GM12878 (cell line): ENCODE measurements at regions of chr12 and their contacts with region 1.

Region 1: GRCh38 chr12:91326058-91327027 is 143.7 kb upstream of the DCN start:
- DNase-seq: no peak
- ATAC-seq: peak; percentile 80
- H3K4me3 ChIP-seq: no peak overlapping the region
- H3K27ac ChIP-seq: no peak overlapping the region
- H3K4me1 ChIP-seq: no peaks in the 10 kb centered on the region
- H3K27me3 ChIP-seq: no peaks in the 10 kb centered on the region
- CTCF ChIP-seq: peak; percentile 61 to 76 (median 65)
- EP300 ChIP-seq: no peak
- POLR2A ChIP-seq: no peak
- RAD21 ChIP-seq: peak; percentile 69

Region 2: GRCh38 chr12:90940872-90941499 is 385.4 kb before region 1 on chr12:
- CTCF ChIA-PET with region 1: interaction called, 17 read pairs
- POLR2A ChIA-PET with region 1: no interaction called
- RAD21 ChIA-PET with region 1: interaction called, 15 read pairs
- SMC1A ChIA-PET with region 1: interaction called, 6 read pairs
- in situ Hi-C with region 1: no loop called
- intact Hi-C with region 1: loop called (anchors 10 kb)
- DNase-seq: no peak
- ATAC-seq: peak; percentile 88
- H3K4me3 ChIP-seq: no peak overlapping the region
- H3K27ac ChIP-seq: no peak overlapping the region
- H3K4me1 ChIP-seq: no peaks in the 10 kb centered on the region
- H3K27me3 ChIP-seq: no peaks in the 10 kb centered on the region
- CTCF ChIP-seq: peak; percentile 41 to 56 (median 55); a peak in 5 of 6 replicates
- EP300 ChIP-seq: no peak
- POLR2A ChIP-seq: no peak
- RAD21 ChIP-seq: peak; percentile 72

Region 3: GRCh38 chr12:90978117-90978770 is 348.1 kb before region 1 on chr12:
- CTCF ChIA-PET with region 1: interaction called, 27 read pairs
- POLR2A ChIA-PET with region 1: no interaction called
- RAD21 ChIA-PET with region 1: no interaction called
- SMC1A ChIA-PET with region 1: interaction called, 4 read pairs
- in situ Hi-C with region 1: loop called (anchors 10 kb)
- intact Hi-C with region 1: loop called (anchors 1 kb)
- DNase-seq: peak; percentile 11
- ATAC-seq: peak; percentile 87
- H3K4me3 ChIP-seq: no peak overlapping the region
- H3K27ac ChIP-seq: no peak overlapping the region
- H3K4me1 ChIP-seq: no peaks in the 10 kb centered on the region
- H3K27me3 ChIP-seq: no peaks in the 10 kb centered on the region; a peak in 1 of 4 replicates
- CTCF ChIP-seq: peak; percentile 56 to 87 (median 58); a peak in 5 of 6 replicates
- EP300 ChIP-seq: no peak
- POLR2A ChIP-seq: no peak
- RAD21 ChIP-seq: peak; percentile 94

Region 4: GRCh38 chr12:90987520-90987919 is 338.8 kb before region 1 on chr12:
- CTCF ChIA-PET with region 1: no interaction called
- POLR2A ChIA-PET with region 1: no interaction called
- RAD21 ChIA-PET with region 1: no interaction called
- SMC1A ChIA-PET with region 1: no interaction called
- in situ Hi-C with region 1: loop called (anchors 10 kb)
- intact Hi-C with region 1: no loop called
- DNase-seq: no peak
- ATAC-seq: peak; percentile 63; the same call in 2 of the 3 replicates
- H3K4me3 ChIP-seq: no peak overlapping the region
- H3K27ac ChIP-seq: no peak overlapping the region
- H3K4me1 ChIP-seq: no peaks in the 10 kb centered on the region
- H3K27me3 ChIP-seq: no peaks in the 10 kb centered on the region
- CTCF ChIP-seq: peak in 1 of 3 experiments; percentile 27; a peak in 1 of 6 replicates
- EP300 ChIP-seq: no peak
- POLR2A ChIP-seq: no peak
- RAD21 ChIP-seq: no peak

Region 5: GRCh38 chr12:91178139-91178561 is 148.2 kb before region 1 on chr12:
- CTCF ChIA-PET with region 1: interaction called, 20 read pairs
- POLR2A ChIA-PET with region 1: no interaction called
- RAD21 ChIA-PET with region 1: interaction called, 7 read pairs
- SMC1A ChIA-PET with region 1: interaction called, 7 read pairs
- in situ Hi-C with region 1: no loop called
- intact Hi-C with region 1: loop called (anchors 2 kb)
- DNase-seq: no peak
- ATAC-seq: peak; percentile 36; the same call in 1 of the 3 replicates
- H3K4me3 ChIP-seq: no peak overlapping the region
- H3K27ac ChIP-seq: no peak overlapping the region
- H3K4me1 ChIP-seq: no peaks in the 10 kb centered on the region
- H3K27me3 ChIP-seq: no peaks in the 10 kb centered on the region
- CTCF ChIP-seq: peak; percentile 10 to 33 (median 21); a peak in 3 of 6 replicates
- EP300 ChIP-seq: no peak
- POLR2A ChIP-seq: no peak
- RAD21 ChIP-seq: peak; percentile 33; the same call in 1 of the 2 replicates

Region 6: DNA sequence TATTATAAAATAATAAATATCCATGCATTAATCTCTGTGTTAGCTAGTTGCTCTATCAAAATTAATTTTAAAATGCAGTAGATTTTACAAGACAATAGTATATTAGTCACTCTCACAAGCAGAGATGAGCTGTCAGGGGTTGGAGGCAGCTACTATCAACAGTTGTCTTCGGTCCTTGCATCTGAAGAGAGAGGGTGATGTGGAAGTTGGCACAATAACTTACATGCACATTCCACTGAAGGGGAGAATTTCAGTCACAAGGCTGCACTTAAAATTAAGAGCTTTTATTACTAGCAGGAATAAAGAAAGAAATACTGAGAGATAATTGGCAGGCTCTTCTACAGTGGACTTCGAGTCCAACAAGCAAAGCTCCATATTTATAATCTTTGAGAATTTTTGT is 23.1 kb after region 1 on chr12:
- CTCF ChIA-PET with region 1: interaction called, 10 read pairs
- POLR2A ChIA-PET with region 1: no interaction called
- RAD21 ChIA-PET with region 1: no interaction called
- SMC1A ChIA-PET with region 1: no interaction called
- in situ Hi-C with region 1: no loop called
- intact Hi-C with region 1: no loop called
- DNase-seq: no peak
- ATAC-seq: no peak
- H3K4me3 ChIP-seq: no peak overlapping the region
- H3K27ac ChIP-seq: no peak overlapping the region
- H3K4me1 ChIP-seq: no peaks in the 10 kb centered on the region
- H3K27me3 ChIP-seq: no peaks in the 10 kb centered on the region
- CTCF ChIP-seq: no peak
- EP300 ChIP-seq: no peak
- POLR2A ChIP-seq: no peak
- RAD21 ChIP-seq: no peak

Region 7: GRCh38 chr12:91441993-91442952 is 115.9 kb after region 1 on chr12:
- CTCF ChIA-PET with region 1: no interaction called
- POLR2A ChIA-PET with region 1: no interaction called
- RAD21 ChIA-PET with region 1: no interaction called
- SMC1A ChIA-PET with region 1: no interaction called
- in situ Hi-C with region 1: no loop called
- intact Hi-C with region 1: no loop called
- DNase-seq: no peak
- ATAC-seq: no peak
- H3K4me3 ChIP-seq: no peak overlapping the region
- H3K27ac ChIP-seq: no peak overlapping the region
- H3K4me1 ChIP-seq: no peaks in the 10 kb centered on the region
- H3K27me3 ChIP-seq: no peaks in the 10 kb centered on the region; a peak in 1 of 4 replicates
- CTCF ChIP-seq: no peak
- EP300 ChIP-seq: no peak
- POLR2A ChIP-seq: no peak
- RAD21 ChIP-seq: no peak